Common myeloid progenitor, CD34-positive (primary cell): ENCODE measurements at regions of chr6 and their contacts with region 1.

Region 1: GRCh38 chr6:53492860-53493634 is 51.9 kb downstream of the GCLC start:
- DNase-seq: peak; percentile 59 to 76 (median 76)
- H3K4me3 ChIP-seq: peak overlapping the region in 4 of 7 experiments; percentile 9 to 73 (median 39)
- H3K27ac ChIP-seq: no peak overlapping the region
- H3K4me1 ChIP-seq: peaks cover 0 to 6% (median 2%) of the 10 kb centered on the region in 4 experiments
- H3K27me3 ChIP-seq: no peaks in the 10 kb centered on the region

Region 2: GRCh38 chr6:53309059-53309900 is 183.8 kb before region 1 on chr6:
- CTCF ChIA-PET with region 1: no interaction called
- POLR2A ChIA-PET with region 1: no interaction called
- DNase-seq: peak in 2 of 3 donors; percentile 86 to 91
- H3K4me3 ChIP-seq: peak overlapping the region in 2 of 7 experiments; percentile 0 to 45
- H3K27ac ChIP-seq: peak overlapping the region; percentile 74 to 88
- H3K4me1 ChIP-seq: peaks cover 34 to 71% (median 57%) of the 10 kb centered on the region in 4 experiments
- H3K27me3 ChIP-seq: no peaks in the 10 kb centered on the region

Region 3: DNA sequence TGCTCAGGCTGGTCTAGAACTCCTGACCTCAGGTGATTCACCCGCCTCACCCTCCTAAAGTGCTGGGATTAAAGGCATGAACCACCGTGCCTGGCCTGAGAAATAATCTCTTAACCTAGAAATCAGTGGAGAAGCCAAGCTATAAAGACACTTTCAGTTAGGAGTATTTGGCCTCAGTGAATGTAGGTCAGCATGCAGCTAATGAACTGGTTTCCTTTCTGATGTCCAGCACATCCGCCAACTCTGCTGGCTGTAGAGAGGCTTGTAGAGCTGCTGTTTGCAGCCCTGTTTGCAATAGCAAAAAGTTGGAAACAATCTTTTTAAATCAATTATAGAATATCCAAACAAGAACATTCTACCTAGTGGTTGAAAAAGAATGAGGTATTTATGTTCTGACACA is 101.9 kb before region 1 on chr6:
- CTCF ChIA-PET with region 1: no interaction called
- POLR2A ChIA-PET with region 1: no interaction called
- DNase-seq: no peak
- H3K4me3 ChIP-seq: no peak overlapping the region
- H3K27ac ChIP-seq: no peak overlapping the region
- H3K4me1 ChIP-seq: no peaks in the 10 kb centered on the region
- H3K27me3 ChIP-seq: no peaks in the 10 kb centered on the region

Region 4: GRCh38 chr6:53536561-53536960 is 43.5 kb after region 1 on chr6:
- CTCF ChIA-PET with region 1: interaction called, 11 read pairs
- POLR2A ChIA-PET with region 1: interaction called, 5 read pairs
- DNase-seq: no peak
- H3K4me3 ChIP-seq: no peak overlapping the region
- H3K27ac ChIP-seq: no peak overlapping the region
- H3K4me1 ChIP-seq: peaks cover 4 to 24% (median 12%) of the 10 kb centered on the region in 4 experiments
- H3K27me3 ChIP-seq: no peaks in the 10 kb centered on the region

Region 5: DNA sequence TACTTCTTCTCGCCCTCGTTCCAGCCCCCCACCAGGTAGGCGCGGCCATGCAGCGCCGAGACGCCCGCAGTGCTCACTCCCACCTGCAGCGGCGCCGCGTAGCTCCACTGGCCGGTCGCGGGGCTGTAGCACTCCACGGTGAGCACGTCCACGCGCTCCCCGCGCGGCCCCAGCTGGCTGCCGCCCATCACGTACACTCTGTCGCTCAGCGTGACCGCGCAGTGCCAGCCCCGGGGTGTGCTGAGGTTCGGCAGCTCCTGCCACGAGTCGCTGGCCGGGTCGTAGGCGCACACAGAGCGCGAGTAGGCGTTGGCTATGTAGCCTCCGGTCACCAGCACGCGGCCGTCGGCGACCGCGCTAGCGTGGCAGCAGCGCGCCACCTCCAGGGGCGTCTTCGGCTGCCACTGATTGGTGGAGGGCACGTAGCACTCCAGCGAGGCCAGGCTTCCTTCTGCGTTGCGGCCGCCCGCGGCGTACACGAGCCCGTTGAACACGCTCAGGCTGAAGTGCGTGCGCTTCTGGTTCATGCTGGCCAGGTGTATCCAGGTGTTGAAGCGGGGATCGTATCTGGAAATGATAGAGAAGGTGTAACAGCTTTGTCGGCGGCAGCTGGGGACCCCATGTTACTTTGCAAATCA is 158.8 kb after region 1 on chr6:
- CTCF ChIA-PET with region 1: interaction called, 92 read pairs
- POLR2A ChIA-PET with region 1: interaction called, 3 read pairs
- DNase-seq: peak; percentile 83 to 93 (median 91)
- H3K4me3 ChIP-seq: peak overlapping the region; percentile 60 to 83 (median 70)
- H3K27ac ChIP-seq: no peak overlapping the region
- H3K4me1 ChIP-seq: peaks cover under 1 to 37% (median 21%) of the 10 kb centered on the region in 4 experiments
- H3K27me3 ChIP-seq: no peaks in the 10 kb centered on the region

Region 6: GRCh38 chr6:53725791-53726431 is 232.9 kb after region 1 on chr6:
- CTCF ChIA-PET with region 1: interaction called, 107 read pairs
- POLR2A ChIA-PET with region 1: no interaction called
- DNase-seq: peak; percentile 71 to 85 (median 81)
- H3K4me3 ChIP-seq: no peak overlapping the region
- H3K27ac ChIP-seq: no peak overlapping the region
- H3K4me1 ChIP-seq: peaks cover 0 to 4% (median 2%) of the 10 kb centered on the region in 4 experiments
- H3K27me3 ChIP-seq: no peaks in the 10 kb centered on the region